ENCODE measurements at regions of chr12 and their contacts with region 1.

Region 1: DNA sequence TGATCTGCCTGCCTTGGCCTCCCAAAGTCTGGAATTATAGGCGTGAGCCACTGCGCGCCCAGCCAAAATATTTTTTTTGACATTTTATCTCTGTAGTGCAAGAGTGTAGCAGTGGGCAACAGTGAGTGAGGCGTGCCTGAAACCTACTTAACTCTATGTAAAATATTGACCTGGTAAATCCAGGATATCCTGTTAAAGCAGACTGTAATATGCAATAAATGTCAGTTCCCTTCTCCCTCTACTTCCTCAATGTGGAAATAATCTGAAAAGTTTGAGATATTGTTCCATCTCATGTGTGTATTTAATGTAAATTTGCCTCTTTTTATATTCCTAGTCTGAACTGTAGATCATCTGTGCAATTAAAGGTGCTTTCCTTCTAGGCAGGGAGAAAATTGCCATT is 9.5 kb upstream of the CDK17 start:
- DNase-seq: no peak
- ATAC-seq: no peak
- H3K4me3 ChIP-seq: no peak overlapping the region
- H3K4me3 Mint-ChIP-seq: no peak overlapping the region
- H3K27ac ChIP-seq: no peak overlapping the region
- H3K27ac Mint-ChIP-seq: no peak overlapping the region
- H3K4me1 ChIP-seq: no peaks in the 10 kb centered on the region
- H3K4me1 Mint-ChIP-seq: no peaks in the 10 kb centered on the region
- H3K27me3 ChIP-seq: no peaks in the 10 kb centered on the region
- H3K27me3 Mint-ChIP-seq: no peaks in the 10 kb centered on the region
- CTCF ChIP-seq: no peak

Region 2: GRCh38 chr12:94586589-94587259 is 1823.0 kb before region 1 on chr12:
- CTCF ChIA-PET with region 1: no interaction called
- POLR2A ChIA-PET with region 1: no interaction called
- intact Hi-C with region 1: no loop called
- DNase-seq: no peak
- ATAC-seq: no peak
- H3K4me3 ChIP-seq: no peak overlapping the region
- H3K4me3 Mint-ChIP-seq: no peak overlapping the region
- H3K27ac ChIP-seq: no peak overlapping the region
- H3K27ac Mint-ChIP-seq: no peak overlapping the region
- H3K4me1 ChIP-seq: no peaks in the 10 kb centered on the region
- H3K4me1 Mint-ChIP-seq: peaks cover 3% of the 10 kb centered on the region
- H3K27me3 ChIP-seq: no peaks in the 10 kb centered on the region
- H3K27me3 Mint-ChIP-seq: peaks cover 6% of the 10 kb centered on the region
- CTCF ChIP-seq: no peak

Region 3: DNA sequence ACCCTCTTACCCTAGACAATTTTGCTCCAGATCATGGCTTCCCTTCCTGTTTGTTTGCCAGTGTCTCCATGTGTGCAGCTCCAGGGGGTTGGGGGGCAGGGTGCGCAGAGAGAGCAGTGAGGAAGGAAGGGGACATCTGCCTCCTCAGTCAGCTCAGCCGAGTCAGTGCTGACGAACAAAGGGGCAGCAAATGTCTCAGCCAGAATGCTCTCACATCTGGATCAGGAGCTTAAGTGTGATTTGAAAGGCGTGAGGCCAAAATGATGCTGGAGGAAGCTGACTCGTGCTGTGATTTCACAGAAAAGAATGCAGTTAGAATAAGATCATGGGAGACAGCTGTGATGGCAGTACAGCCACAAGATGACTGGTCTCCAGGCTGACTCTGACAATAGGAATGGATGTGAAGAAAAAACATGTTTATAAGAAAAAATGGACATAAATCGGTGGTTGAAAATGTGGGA is 17.6 kb after region 1 on chr12:
- CTCF ChIA-PET with region 1: interaction called, 3 read pairs
- POLR2A ChIA-PET with region 1: interaction called, 3 read pairs
- intact Hi-C with region 1: loop called in 1 of 2 experiments (anchors 1 kb)
- DNase-seq: no peak
- ATAC-seq: no peak
- H3K4me3 ChIP-seq: no peak overlapping the region
- H3K4me3 Mint-ChIP-seq: no peak overlapping the region
- H3K27ac ChIP-seq: no peak overlapping the region
- H3K27ac Mint-ChIP-seq: no peak overlapping the region
- H3K4me1 ChIP-seq: no peaks in the 10 kb centered on the region
- H3K4me1 Mint-ChIP-seq: peaks cover 17% of the 10 kb centered on the region
- H3K27me3 ChIP-seq: no peaks in the 10 kb centered on the region
- H3K27me3 Mint-ChIP-seq: no peaks in the 10 kb centered on the region
- CTCF ChIP-seq: no peak

Measured in CD8-positive, alpha-beta T cell (primary cell).